ENCODE measurements at regions of chr11 and their contacts with region 1.

Region 1: DNA sequence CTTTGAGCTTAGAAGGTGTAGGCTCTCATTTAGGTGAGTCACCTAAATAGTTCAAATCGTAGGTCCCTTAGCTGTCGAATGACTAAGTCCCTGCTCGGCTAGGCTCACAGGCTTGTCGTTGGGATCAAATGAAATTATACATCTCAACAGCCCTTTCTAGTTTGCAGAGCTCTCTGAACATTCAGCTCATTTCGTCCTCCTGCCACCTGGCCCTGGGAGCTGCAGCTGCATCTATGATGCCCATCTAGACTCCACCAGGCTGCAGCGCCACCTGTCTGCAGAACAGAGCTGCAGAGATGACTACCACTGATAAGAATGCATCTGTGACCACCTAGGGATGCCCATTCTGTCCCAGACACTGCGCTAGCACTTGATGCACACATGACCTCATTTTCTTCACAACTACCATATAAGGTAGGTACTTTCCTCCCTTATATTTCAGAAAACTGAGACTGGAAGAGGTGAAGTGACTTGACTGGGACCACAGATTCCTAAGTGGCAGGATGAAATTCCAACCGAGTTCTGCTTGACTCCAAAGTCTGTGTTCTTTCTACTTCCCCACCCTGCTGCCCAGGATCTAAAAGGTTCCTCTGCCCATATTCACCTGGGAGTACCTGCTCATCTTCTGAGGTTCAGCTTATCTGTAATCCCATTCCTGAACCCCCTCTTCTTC is 141.1 kb upstream of the NARS2 start:
- DNase-seq: peak; percentile 89
- ATAC-seq: peak; percentile 99
- H3K4me3 Mint-ChIP-seq: no peak overlapping the region
- H3K27ac Mint-ChIP-seq: no peak overlapping the region
- H3K4me1 Mint-ChIP-seq: peaks cover 7% of the 10 kb centered on the region
- H3K27me3 Mint-ChIP-seq: no peaks in the 10 kb centered on the region
- CTCF ChIP-seq: peak; percentile 73

Region 2: GRCh38 chr11:78659326-78660270 is 56.2 kb before region 1 on chr11:
- CTCF ChIA-PET with region 1: interaction called, 27 read pairs
- POLR2A ChIA-PET with region 1: no interaction called
- DNase-seq: no peak
- ATAC-seq: peak; percentile 82
- H3K4me3 Mint-ChIP-seq: no peak overlapping the region
- H3K27ac Mint-ChIP-seq: no peak overlapping the region; the same call in 1 of the 2 replicates
- H3K4me1 Mint-ChIP-seq: peaks cover 8% of the 10 kb centered on the region
- H3K27me3 Mint-ChIP-seq: no peaks in the 10 kb centered on the region
- CTCF ChIP-seq: no peak

Region 3: GRCh38 chr11:78688464-78688863 is 27.3 kb before region 1 on chr11:
- CTCF ChIA-PET with region 1: interaction called, 22 read pairs
- POLR2A ChIA-PET with region 1: no interaction called
- DNase-seq: no peak
- ATAC-seq: peak; percentile 19
- H3K4me3 Mint-ChIP-seq: no peak overlapping the region
- H3K27ac Mint-ChIP-seq: peak overlapping the region; percentile 23; the same call in 1 of the 2 replicates
- H3K4me1 Mint-ChIP-seq: peaks cover 36% of the 10 kb centered on the region
- H3K27me3 Mint-ChIP-seq: no peaks in the 10 kb centered on the region
- CTCF ChIP-seq: no peak

Region 4: GRCh38 chr11:78731027-78731426 is 15.3 kb after region 1 on chr11:
- CTCF ChIA-PET with region 1: interaction called, 23 read pairs
- POLR2A ChIA-PET with region 1: no interaction called
- DNase-seq: no peak
- ATAC-seq: no peak
- H3K4me3 Mint-ChIP-seq: no peak overlapping the region
- H3K27ac Mint-ChIP-seq: no peak overlapping the region
- H3K4me1 Mint-ChIP-seq: peaks cover 3% of the 10 kb centered on the region; the same call in 1 of the 2 replicates
- H3K27me3 Mint-ChIP-seq: no peaks in the 10 kb centered on the region
- CTCF ChIP-seq: no peak

Region 5: DNA sequence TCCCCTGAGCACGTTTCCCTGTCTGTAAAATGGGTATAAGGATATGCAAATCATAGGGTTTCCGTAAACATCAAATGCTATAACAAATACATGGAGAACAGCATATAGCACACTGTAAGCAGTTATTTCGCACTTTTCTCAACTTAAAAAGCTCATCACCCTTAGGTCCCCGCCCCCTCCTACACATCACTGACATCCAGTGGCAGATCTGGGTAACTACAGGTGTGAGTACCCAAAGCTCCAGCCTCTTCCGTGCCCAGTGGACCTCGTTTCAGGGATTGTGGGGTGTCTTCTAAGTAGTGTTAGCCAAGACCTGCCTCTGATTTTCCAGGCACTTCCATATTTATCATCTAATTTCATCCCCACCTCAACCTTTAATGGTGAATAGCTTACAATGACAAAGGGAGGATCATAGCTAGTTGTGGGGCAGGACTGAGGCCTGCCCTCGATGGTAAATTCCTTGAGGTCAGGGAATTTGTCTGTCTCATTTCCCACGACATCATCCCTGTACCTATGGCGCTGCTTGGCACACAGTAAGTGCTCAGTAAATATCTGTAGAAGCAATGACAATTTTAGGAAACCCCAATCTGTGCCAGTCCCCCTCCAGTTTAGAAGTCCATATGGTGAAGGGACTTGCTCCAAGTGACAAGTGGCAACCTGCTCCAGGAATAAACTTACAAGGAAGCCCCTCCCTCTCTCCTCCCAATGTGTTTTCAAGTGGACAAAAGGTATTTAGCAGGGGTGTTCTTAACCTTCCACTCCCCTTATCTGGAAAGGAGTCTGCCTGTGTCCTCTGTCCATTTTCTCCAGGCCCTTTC is 384.5 kb after region 1 on chr11:
- CTCF ChIA-PET with region 1: interaction called, 13 read pairs
- POLR2A ChIA-PET with region 1: no interaction called
- DNase-seq: peak; percentile 56
- ATAC-seq: peak; percentile 93
- H3K4me3 Mint-ChIP-seq: no peak overlapping the region
- H3K27ac Mint-ChIP-seq: no peak overlapping the region
- H3K4me1 Mint-ChIP-seq: peaks cover 6% of the 10 kb centered on the region
- H3K27me3 Mint-ChIP-seq: no peaks in the 10 kb centered on the region; the same call in 1 of the 2 replicates
- CTCF ChIP-seq: peak; percentile 70

Measured in WTC11 (cell line).